Left ventricle myocardium inferior (tissue), 1 donor: ENCODE measurements at regions of chr2 and their contacts with region 1.

Region 1: GRCh38 chr2:109545828-109546713 is 67.7 kb downstream of the SEPTIN10 start:
- DNase-seq: peak; percentile 57
- H3K4me3 ChIP-seq: no peak overlapping the region
- H3K27ac ChIP-seq: no peak overlapping the region
- H3K4me1 ChIP-seq: no peaks in the 10 kb centered on the region
- H3K27me3 ChIP-seq: no peaks in the 10 kb centered on the region
- CTCF ChIP-seq: peak; percentile 94

Region 2: GRCh38 chr2:109331896-109332848 is 213.9 kb before region 1 on chr2:
- intact Hi-C with region 1: no loop called
- DNase-seq: peak; percentile 79
- H3K4me3 ChIP-seq: peak overlapping the region; percentile 50
- H3K27ac ChIP-seq: peak overlapping the region; percentile 86
- H3K4me1 ChIP-seq: peaks cover 53% of the 10 kb centered on the region
- H3K27me3 ChIP-seq: no peaks in the 10 kb centered on the region
- CTCF ChIP-seq: no peak

Region 3: DNA sequence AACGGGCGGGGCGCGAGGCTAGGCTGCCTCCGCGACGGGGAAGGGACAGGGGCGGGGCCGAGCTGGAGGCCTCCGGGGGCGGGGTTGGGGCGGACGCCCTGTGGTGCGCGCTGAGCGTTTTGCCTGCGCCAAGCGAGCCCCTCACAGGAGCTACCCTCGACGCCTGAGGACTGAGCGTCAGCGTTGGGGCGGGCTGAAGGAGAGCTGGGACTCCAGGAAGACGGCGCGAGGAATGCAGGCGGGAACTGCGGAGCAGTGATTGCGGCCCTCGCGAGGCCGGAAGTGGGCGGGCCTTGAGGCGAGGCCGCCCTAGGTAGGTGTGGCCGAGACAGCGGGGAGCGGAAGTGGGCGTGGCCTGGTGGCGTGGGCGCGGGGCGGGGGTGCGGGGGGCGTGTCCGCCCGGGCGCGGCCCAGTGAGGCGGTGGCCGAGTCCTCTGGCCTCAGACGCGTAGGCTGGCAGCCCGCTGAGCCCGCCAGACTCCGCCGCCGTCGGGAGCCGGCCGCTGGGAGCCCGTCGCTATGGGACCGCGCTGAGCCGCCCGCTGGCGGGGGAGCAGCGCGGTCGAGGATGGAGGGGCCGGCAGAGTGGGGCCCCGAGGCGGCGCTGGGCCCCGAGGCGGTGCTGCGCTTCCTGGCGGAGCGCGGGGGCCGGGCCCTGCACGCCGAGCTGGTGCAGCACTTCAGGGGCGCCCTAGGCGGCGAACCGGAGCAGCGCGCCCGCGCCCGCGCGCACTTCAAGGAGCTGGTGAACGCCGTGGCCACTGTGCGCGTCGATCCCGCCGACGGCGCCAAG is 68.0 kb after region 1 on chr2 and contains the starts of genes SEPTIN10 and SOWAHC:
- intact Hi-C with region 1: loop called (anchors 10 kb)
- DNase-seq: peak; percentile 96
- H3K4me3 ChIP-seq: peak within 1 kb of the TSS; percentile 82
- H3K27ac ChIP-seq: peak within 1 kb of the TSS; percentile 98
- H3K4me1 ChIP-seq: peaks cover 62% of the 10 kb centered on the region
- H3K27me3 ChIP-seq: no peaks in the 10 kb centered on the region
- CTCF ChIP-seq: no peak
- total RNA-seq, gene SEPTIN10: 55.4 TPM
- total RNA-seq, gene SOWAHC: 2.3 TPM

Region 4: GRCh38 chr2:110958346-110959119 is 1412.5 kb after region 1 on chr2:
- intact Hi-C with region 1: no loop called
- DNase-seq: no peak
- H3K4me3 ChIP-seq: no peak overlapping the region
- H3K27ac ChIP-seq: no peak overlapping the region
- H3K4me1 ChIP-seq: no peaks in the 10 kb centered on the region
- H3K27me3 ChIP-seq: peaks cover 16% of the 10 kb centered on the region
- CTCF ChIP-seq: no peak